Activated B cell treated with CpG ODN at 0.5 μM for 24 hours (primary cell): ENCODE measurements at regions of chr9 and their contacts with region 1.

Region 1: GRCh38 chr9:4180907-4181605 is 118.8 kb downstream of the GLIS3 start:
- DNase-seq: no peak
- ATAC-seq: no peak
- H3K4me3 Mint-ChIP-seq: no peak overlapping the region
- H3K27ac Mint-ChIP-seq: no peak overlapping the region
- H3K4me1 Mint-ChIP-seq: no peaks in the 10 kb centered on the region
- H3K27me3 Mint-ChIP-seq: no peaks in the 10 kb centered on the region
- CTCF ChIP-seq: no peak

Region 2: GRCh38 chr9:2199999-2200796 is 1980.9 kb before region 1 on chr9:
- CTCF ChIA-PET with region 1: no interaction called
- POLR2A ChIA-PET with region 1: no interaction called
- intact Hi-C with region 1: loop called (anchors 10 kb)
- DNase-seq: no peak
- ATAC-seq: no peak
- H3K4me3 Mint-ChIP-seq: no peak overlapping the region
- H3K27ac Mint-ChIP-seq: no peak overlapping the region
- H3K4me1 Mint-ChIP-seq: no peaks in the 10 kb centered on the region
- H3K27me3 Mint-ChIP-seq: no peaks in the 10 kb centered on the region
- CTCF ChIP-seq: no peak

Region 3: DNA sequence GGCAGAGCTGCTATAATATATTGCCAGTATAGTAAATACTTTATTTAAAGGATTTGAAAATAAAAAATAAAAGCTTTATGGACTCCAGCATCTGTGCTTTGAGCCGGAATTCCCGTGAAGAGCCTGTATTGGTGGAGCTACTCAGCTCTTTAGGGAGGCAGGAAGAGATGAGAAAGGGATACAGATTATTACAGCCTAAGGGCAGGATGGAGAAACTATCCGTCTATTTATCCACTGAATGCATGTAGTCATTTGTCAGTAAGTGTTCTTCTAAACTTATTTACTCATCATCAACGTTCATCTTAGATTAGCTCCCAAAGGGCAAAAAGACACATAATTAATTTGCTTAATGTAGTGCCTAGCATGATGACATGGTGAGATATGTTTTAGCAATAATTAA is 357.6 kb after region 1 on chr9:
- CTCF ChIA-PET with region 1: no interaction called
- POLR2A ChIA-PET with region 1: no interaction called
- intact Hi-C with region 1: no loop called
- DNase-seq: no peak
- ATAC-seq: no peak
- H3K4me3 Mint-ChIP-seq: no peak overlapping the region
- H3K27ac Mint-ChIP-seq: no peak overlapping the region
- H3K4me1 Mint-ChIP-seq: no peaks in the 10 kb centered on the region
- H3K27me3 Mint-ChIP-seq: no peaks in the 10 kb centered on the region
- CTCF ChIP-seq: no peak